Spleen (tissue), 13 donors: ENCODE measurements at regions of chr7 and their contacts with region 1.

Region 1: GRCh38 chr7:128031901-128032604 is 816 bp upstream of the LRRC4 start:
- DNase-seq: peak; percentile 90
- H3K4me3 ChIP-seq: peak overlapping the region; percentile 49 to 88 (median 64)
- H3K27ac ChIP-seq: peak overlapping the region in 7 of 8 donors; percentile 80 to 94 (median 87)
- H3K4me1 ChIP-seq: peaks cover 0 to 94% (median 38%) of the 10 kb centered on the region in 6 donors
- H3K27me3 ChIP-seq: peaks cover 0 to 27% (median 0%) of the 10 kb centered on the region in 7 donors
- CTCF ChIP-seq: peak in 7 of 11 experiments; percentile 10 to 38 (median 27)
- POLR2A ChIP-seq: peak in 1 of 3 donors; percentile 32

Region 2: GRCh38 chr7:127717502-127718339 is 314.3 kb before region 1 on chr7:
- intact Hi-C with region 1: loop called (anchors 10 kb)
- DNase-seq: no peak
- H3K4me3 ChIP-seq: no peak overlapping the region
- H3K27ac ChIP-seq: no peak overlapping the region
- H3K4me1 ChIP-seq: peaks cover 0 to 28% (median 1%) of the 10 kb centered on the region in 6 donors
- H3K27me3 ChIP-seq: no peaks in the 10 kb centered on the region
- CTCF ChIP-seq: no peak
- POLR2A ChIP-seq: no peak

Region 3: DNA sequence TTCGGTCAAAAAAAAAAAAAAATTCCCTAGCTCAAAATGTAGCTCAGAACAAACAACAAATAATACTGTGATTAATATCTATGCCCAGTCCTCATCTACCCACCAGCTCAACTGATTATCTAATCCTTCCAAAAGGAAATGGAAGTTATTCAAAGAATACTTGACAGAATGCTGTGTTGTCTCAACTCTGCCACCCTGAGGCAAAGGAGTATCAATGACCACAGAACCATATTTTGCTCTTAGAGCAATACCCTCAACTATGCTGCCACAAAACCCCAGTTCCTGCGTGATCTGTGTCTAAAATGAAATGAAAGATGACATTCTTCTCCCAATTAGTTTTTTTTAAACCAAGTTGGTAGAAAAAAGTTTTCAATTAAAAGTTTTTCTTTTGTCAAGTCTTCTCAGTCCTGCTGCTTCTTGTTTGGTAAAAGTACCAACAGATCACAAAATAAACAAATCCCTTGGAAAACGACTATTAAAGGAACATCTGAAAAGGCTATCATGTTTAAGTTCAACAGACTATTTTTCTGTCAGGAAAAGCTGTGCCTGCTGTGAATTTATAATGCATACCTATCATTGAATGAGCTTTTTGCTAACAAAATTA is 290.1 kb after region 1 on chr7:
- intact Hi-C with region 1: no loop called
- DNase-seq: no peak
- H3K4me3 ChIP-seq: no peak overlapping the region
- H3K27ac ChIP-seq: peak overlapping the region in 4 of 8 donors; percentile 21 to 77 (median 68)
- H3K4me1 ChIP-seq: peaks cover 4 to 53% (median 30%) of the 10 kb centered on the region in 6 donors
- H3K27me3 ChIP-seq: no peaks in the 10 kb centered on the region
- CTCF ChIP-seq: peak in 6 of 11 experiments; percentile 26 to 55 (median 48)
- POLR2A ChIP-seq: no peak